ENCODE measurements at regions of chr17 and their contacts with region 1.

Region 1: DNA sequence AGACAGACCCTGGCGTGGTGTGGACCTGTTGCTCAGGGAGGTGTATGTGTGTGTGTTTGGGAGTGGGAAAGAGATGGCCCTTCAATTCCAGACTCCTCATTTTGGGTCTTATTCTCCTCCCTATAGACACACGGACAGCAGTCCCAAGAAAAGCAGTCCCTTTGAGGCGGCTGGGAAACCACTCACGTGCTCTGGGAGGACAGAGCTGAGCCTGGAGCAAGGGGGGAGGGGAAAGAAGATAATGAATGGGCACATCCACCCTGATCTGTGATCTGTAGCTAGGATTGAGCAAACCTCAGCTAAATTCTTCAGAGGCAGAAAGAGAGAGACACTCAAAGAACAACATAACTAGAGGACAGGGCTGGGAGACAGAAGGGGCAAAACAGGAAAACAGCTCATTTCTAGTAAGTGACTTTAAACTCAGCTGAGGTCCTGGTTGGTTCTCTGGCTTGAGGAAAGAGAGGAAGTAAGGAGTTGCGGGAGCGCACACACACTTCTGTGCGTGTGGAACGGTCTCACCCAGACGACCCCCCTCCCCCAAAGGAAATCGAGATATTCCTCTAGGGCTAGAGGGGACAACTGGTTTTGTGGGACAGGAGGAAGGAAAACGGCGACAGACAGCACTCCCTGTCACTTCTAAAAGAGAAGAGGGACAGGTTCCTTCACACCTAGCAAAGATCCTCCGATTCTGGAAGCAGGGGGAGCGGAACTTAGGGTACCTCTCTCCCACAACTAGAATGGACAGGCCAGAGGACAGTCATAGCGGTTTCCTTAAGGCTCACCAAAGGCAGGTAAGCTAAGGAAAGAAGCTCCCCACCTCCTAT is 658 bp downstream of the RAB5C start:
- DNase-seq: peak in 1 of 2 donors; percentile 33
- ATAC-seq: no peak
- H3K4me3 ChIP-seq: peak overlapping the region; percentile 89
- H3K4me3 Mint-ChIP-seq: peak overlapping the region; percentile 94
- H3K27ac ChIP-seq: peak overlapping the region; percentile 73
- H3K27ac Mint-ChIP-seq: peak overlapping the region; percentile 84 to 87
- H3K4me1 ChIP-seq: peaks cover 27% of the 10 kb centered on the region
- H3K4me1 Mint-ChIP-seq: peaks cover 19 to 44% of the 10 kb centered on the region in 2 donors
- H3K27me3 ChIP-seq: no peaks in the 10 kb centered on the region
- H3K27me3 Mint-ChIP-seq: no peaks in the 10 kb centered on the region
- CTCF ChIP-seq: no peak

Region 2: GRCh38 chr17:42183741-42184711 is 29.9 kb after region 1 on chr17:
- intact Hi-C with region 1: loop called (anchors 2 kb)
- DNase-seq: peak; percentile 82 to 88
- ATAC-seq: peak; percentile 73 to 86 (median 73)
- H3K4me3 ChIP-seq: peak overlapping the region; percentile 78
- H3K4me3 Mint-ChIP-seq: peak overlapping the region; percentile 94
- H3K27ac ChIP-seq: peak overlapping the region; percentile 88
- H3K27ac Mint-ChIP-seq: peak overlapping the region; percentile 85 to 86
- H3K4me1 ChIP-seq: peaks cover 44% of the 10 kb centered on the region
- H3K4me1 Mint-ChIP-seq: peaks cover 22 to 36% of the 10 kb centered on the region in 2 donors
- H3K27me3 ChIP-seq: peaks cover 12% of the 10 kb centered on the region
- H3K27me3 Mint-ChIP-seq: peaks cover 0 to 12% of the 10 kb centered on the region in 2 donors
- CTCF ChIP-seq: peak; percentile 90

Region 3: GRCh38 chr17:42200702-42201101 is 46.6 kb after region 1 on chr17:
- intact Hi-C with region 1: no loop called
- DNase-seq: no peak
- ATAC-seq: no peak
- H3K4me3 ChIP-seq: no peak overlapping the region
- H3K4me3 Mint-ChIP-seq: no peak overlapping the region
- H3K27ac ChIP-seq: no peak overlapping the region
- H3K27ac Mint-ChIP-seq: no peak overlapping the region
- H3K4me1 ChIP-seq: peaks cover 4% of the 10 kb centered on the region
- H3K4me1 Mint-ChIP-seq: no peaks in the 10 kb centered on the region
- H3K27me3 ChIP-seq: no peaks in the 10 kb centered on the region
- H3K27me3 Mint-ChIP-seq: no peaks in the 10 kb centered on the region
- CTCF ChIP-seq: no peak

Measured in natural killer cell (primary cell).